CD14-positive monocyte (primary cell): ENCODE measurements at regions of chr4 and their contacts with region 1.

Region 1: GRCh38 chr4:168797176-168797575 is 212.9 kb downstream of the CBR4 start:
- DNase-seq: peak; percentile 75 to 93 (median 84)
- H3K4me3 ChIP-seq: peak overlapping the region; percentile 14 to 58 (median 32)
- H3K4me3 Mint-ChIP-seq: peak overlapping the region; percentile 59 to 82
- H3K27ac ChIP-seq: peak overlapping the region; percentile 69 to 94
- H3K27ac Mint-ChIP-seq: peak overlapping the region; percentile 90 to 97 (median 96)
- H3K4me1 ChIP-seq: peaks cover 49 to 68% of the 10 kb centered on the region in 2 donors
- H3K4me1 Mint-ChIP-seq: peaks cover 57% of the 10 kb centered on the region
- H3K27me3 ChIP-seq: no peaks in the 10 kb centered on the region
- H3K27me3 Mint-ChIP-seq: no peaks in the 10 kb centered on the region
- CTCF ChIP-seq: no peak

Region 2: DNA sequence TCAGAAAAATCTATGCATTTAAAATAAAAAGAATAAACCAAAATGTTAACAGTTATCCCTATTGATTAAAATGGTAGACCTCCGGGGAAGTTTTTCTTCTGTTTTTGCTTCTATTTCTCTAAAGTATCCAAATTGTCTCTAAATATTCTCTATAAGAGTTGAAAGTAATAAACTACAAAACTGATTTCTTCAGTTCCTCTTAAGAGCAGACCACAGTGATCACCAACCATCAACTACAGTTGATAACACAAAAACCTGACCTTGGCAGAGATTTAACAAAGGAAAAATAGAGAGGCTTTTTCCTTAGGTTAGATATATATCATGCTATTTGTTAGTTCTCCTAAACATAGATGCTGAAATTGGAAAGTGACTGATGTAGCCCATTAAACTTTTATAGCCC is 505.9 kb before region 1 on chr4:
- intact Hi-C with region 1: no loop called
- DNase-seq: no peak
- H3K4me3 ChIP-seq: no peak overlapping the region
- H3K4me3 Mint-ChIP-seq: no peak overlapping the region
- H3K27ac ChIP-seq: no peak overlapping the region
- H3K27ac Mint-ChIP-seq: no peak overlapping the region
- H3K4me1 ChIP-seq: no peaks in the 10 kb centered on the region
- H3K4me1 Mint-ChIP-seq: peaks cover under 1% of the 10 kb centered on the region
- H3K27me3 ChIP-seq: no peaks in the 10 kb centered on the region
- H3K27me3 Mint-ChIP-seq: no peaks in the 10 kb centered on the region
- CTCF ChIP-seq: no peak

Region 3: GRCh38 chr4:168723020-168723419 is 74.2 kb before region 1 on chr4:
- intact Hi-C with region 1: loop called (anchors 5 to 10 kb)
- DNase-seq: peak; percentile 30 to 58 (median 49)
- H3K4me3 ChIP-seq: peak overlapping the region in 1 of 3 experiments; percentile 4
- H3K4me3 Mint-ChIP-seq: peak overlapping the region; percentile 0 to 58
- H3K27ac ChIP-seq: no peak overlapping the region
- H3K27ac Mint-ChIP-seq: peak overlapping the region in 6 of 7 donors; percentile 48 to 82 (median 74)
- H3K4me1 ChIP-seq: peaks cover 39 to 51% of the 10 kb centered on the region in 2 donors
- H3K4me1 Mint-ChIP-seq: peaks cover 45% of the 10 kb centered on the region
- H3K27me3 ChIP-seq: no peaks in the 10 kb centered on the region
- H3K27me3 Mint-ChIP-seq: peaks cover 0 to 4% (median 0%) of the 10 kb centered on the region in 3 donors
- CTCF ChIP-seq: no peak

Region 4: GRCh38 chr4:168847771-168848511 is 50.8 kb after region 1 on chr4:
- intact Hi-C with region 1: no loop called
- DNase-seq: peak; percentile 28 to 61 (median 28)
- H3K4me3 ChIP-seq: peak overlapping the region; percentile 19 to 59 (median 50)
- H3K4me3 Mint-ChIP-seq: peak overlapping the region; percentile 66 to 69
- H3K27ac ChIP-seq: peak overlapping the region; percentile 31 to 81
- H3K27ac Mint-ChIP-seq: peak overlapping the region; percentile 75 to 96 (median 85)
- H3K4me1 ChIP-seq: peaks cover 15 to 30% of the 10 kb centered on the region in 2 donors
- H3K4me1 Mint-ChIP-seq: peaks cover 30% of the 10 kb centered on the region
- H3K27me3 ChIP-seq: no peaks in the 10 kb centered on the region
- H3K27me3 Mint-ChIP-seq: peaks cover 0 to 3% (median 0%) of the 10 kb centered on the region in 3 donors
- CTCF ChIP-seq: no peak

Region 5: DNA sequence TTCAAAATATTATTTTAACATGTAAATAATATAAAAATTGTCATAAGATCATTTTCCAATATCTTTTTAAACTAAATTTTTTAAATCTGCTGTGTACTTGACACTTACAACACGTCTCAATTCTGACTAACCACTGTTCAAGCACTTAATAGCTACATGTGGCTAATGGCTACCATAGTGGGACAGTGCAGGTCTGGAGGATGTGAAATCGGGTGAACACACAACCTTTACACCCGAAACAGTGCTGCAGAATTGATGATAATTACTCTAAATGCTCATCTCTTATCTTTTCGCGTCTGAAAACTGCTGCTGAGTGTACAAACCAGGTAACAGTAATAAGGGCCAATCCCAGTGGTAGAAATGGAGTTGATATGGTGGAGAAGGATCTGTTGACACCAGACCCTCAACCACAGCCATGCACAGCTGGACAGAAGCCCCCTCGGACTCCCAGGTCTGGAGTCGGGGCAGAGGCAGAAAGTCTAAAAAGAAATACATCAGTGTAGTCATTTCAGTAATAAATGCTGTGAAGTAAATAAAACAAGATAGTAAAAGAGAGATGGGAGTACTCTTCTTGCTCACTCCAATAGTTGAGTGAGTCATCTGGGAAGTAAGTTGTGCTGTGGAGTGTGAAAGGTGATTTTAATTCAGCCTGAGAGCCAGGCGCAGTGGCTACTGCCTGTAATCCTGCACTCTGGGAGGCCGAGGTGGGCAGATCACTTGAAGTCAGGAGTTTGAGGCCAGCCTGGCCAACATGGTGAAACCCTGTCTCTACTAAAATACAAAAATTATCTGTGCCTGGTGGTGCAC is 62.9 kb after region 1 on chr4:
- intact Hi-C with region 1: no loop called
- DNase-seq: no peak
- H3K4me3 ChIP-seq: no peak overlapping the region
- H3K4me3 Mint-ChIP-seq: no peak overlapping the region
- H3K27ac ChIP-seq: no peak overlapping the region
- H3K27ac Mint-ChIP-seq: no peak overlapping the region
- H3K4me1 ChIP-seq: no peaks in the 10 kb centered on the region
- H3K4me1 Mint-ChIP-seq: peaks cover 4% of the 10 kb centered on the region
- H3K27me3 ChIP-seq: no peaks in the 10 kb centered on the region
- H3K27me3 Mint-ChIP-seq: peaks cover 0 to 4% (median 2%) of the 10 kb centered on the region in 3 donors
- CTCF ChIP-seq: no peak